SK-N-SH (cell line): ENCODE measurements at regions of chr2 and their contacts with region 1.

Region 1: DNA sequence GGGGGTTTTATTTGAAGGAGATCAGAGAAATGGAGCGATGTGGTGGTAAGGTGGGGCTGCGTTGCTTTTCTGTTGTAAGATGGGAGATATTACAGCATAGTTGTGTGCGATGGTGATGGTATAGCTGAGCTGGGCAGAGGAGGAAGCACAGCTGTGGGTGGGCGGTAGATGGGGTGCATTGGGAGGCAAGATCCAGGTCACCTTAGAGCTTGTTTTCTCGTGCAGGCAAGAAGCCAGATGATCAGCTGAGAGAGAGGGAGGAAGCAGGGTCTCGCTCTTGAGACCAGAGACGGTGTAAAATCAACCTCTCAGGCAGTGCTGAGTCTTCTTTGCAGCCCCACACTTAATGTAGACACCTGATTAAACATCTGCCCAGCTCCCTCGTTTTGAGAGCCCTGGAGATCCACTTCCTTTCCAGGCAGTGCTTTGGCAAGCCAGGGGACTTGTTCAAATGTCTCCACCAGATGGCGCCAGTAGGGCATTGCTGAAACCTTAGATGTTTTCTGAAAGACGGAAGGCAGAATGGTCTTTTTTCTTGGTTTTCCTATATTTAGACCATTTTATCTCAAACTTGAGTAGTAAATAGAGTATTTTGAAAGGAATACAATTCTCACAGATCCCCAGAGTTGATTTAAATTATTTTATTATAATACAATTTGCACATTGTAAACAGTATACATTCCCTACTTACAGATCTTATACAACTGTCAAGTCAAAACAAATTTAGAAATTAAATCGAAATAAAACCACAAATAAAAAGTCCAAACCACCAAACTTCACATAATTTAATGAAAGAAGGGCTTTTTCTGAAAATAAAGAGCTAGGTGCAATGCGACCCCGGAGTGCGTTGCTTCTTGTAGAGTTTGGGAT is 21.1 kb upstream of the LYPD6B start:
- DNase-seq: peak; percentile 77
- H3K4me3 ChIP-seq: peak overlapping the region in 1 of 2 experiments; percentile 45; a peak in 1 of 4 replicates
- H3K27ac ChIP-seq: no peak overlapping the region
- H3K4me1 ChIP-seq: peaks cover 0 to 5% of the 10 kb centered on the region in 2 experiments; a peak in 2 of 4 replicates
- H3K27me3 ChIP-seq: no peaks in the 10 kb centered on the region
- CTCF ChIP-seq: peak; percentile 88
- EP300 ChIP-seq: no peak
- RAD21 ChIP-seq: peak; percentile 92

Region 2: GRCh38 chr2:148720501-148721001 is 296.8 kb before region 1 on chr2:
- CTCF ChIA-PET with region 1: no interaction called
- POLR2A ChIA-PET with region 1: no interaction called
- DNase-seq: peak; percentile 22
- H3K4me3 ChIP-seq: peak overlapping the region in 1 of 2 experiments; percentile 12; a peak in 2 of 4 replicates
- H3K27ac ChIP-seq: peak overlapping the region in 1 of 2 experiments; percentile 64; a peak in 2 of 4 replicates
- H3K4me1 ChIP-seq: peaks cover 14 to 19% of the 10 kb centered on the region in 2 experiments; a peak in 3 of 4 replicates
- H3K27me3 ChIP-seq: no peaks in the 10 kb centered on the region
- CTCF ChIP-seq: no peak
- EP300 ChIP-seq: no peak
- RAD21 ChIP-seq: no peak

Region 3: GRCh38 chr2:149006883-149007540 is 10.3 kb before region 1 on chr2:
- CTCF ChIA-PET with region 1: interaction called, 13 read pairs
- POLR2A ChIA-PET with region 1: no interaction called
- DNase-seq: peak; percentile 3
- H3K4me3 ChIP-seq: no peak overlapping the region
- H3K27ac ChIP-seq: no peak overlapping the region
- H3K4me1 ChIP-seq: no peaks in the 10 kb centered on the region; a peak in 1 of 4 replicates
- H3K27me3 ChIP-seq: no peaks in the 10 kb centered on the region
- CTCF ChIP-seq: no peak
- EP300 ChIP-seq: no peak
- RAD21 ChIP-seq: no peak

Region 4: DNA sequence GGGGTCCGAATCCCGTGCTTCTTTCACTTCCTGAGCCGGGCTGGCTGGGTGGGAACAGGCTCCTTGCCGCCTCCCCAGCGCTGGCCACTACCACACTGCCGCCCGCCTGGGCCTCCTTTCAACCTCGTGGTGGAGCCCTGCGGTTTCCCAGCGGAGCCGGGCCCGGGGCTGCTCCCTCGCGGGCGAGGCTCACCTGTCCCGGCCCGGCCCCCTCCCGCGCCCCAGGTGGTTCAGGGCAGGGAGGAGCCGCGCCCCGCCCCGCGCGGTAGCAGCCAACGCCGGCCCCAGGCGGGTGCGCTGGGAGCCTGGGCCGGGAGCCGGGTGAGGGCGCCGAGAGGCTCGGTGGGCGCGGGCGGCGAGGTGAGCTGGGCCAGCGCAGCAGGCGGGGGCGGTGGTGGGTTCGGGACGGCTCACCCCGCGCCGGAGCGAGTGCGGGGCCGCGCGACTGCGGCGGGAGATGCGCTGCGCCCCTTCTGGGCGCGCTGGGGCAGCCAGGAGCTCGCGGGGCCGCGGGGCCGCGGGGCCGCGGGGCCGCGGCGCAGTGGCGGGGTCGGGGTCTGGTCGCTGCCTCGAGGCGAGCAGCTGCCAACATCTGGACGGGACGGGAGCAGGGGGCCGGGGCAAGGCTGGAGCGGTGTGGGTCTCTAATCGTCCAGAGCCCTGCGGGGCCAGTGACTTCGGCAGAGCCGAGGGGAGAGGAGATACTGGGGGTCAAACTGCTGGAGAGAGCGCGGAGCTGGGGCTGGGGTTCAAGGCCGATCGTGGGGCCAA is 21.3 kb after region 1 on chr2 and contains the start of gene LYPD6B:
- CTCF ChIA-PET with region 1: interaction called, 55 read pairs
- POLR2A ChIA-PET with region 1: no interaction called
- DNase-seq: peak; percentile 87
- H3K4me3 ChIP-seq: peak within 1 kb of the TSS; percentile 58 to 63
- H3K27ac ChIP-seq: no peak within 1 kb of the TSS
- H3K4me1 ChIP-seq: peaks cover 0 to 7% of the 10 kb centered on the region in 2 experiments; a peak in 1 of 4 replicates
- H3K27me3 ChIP-seq: no peaks in the 10 kb centered on the region
- CTCF ChIP-seq: peak; percentile 13; the same call in 1 of the 2 replicates
- EP300 ChIP-seq: no peak
- RAD21 ChIP-seq: peak; percentile 16
- polyA plus RNA-seq, gene LYPD6B: 17.0 and 18.2 TPM in 2 replicates

Region 5: DNA sequence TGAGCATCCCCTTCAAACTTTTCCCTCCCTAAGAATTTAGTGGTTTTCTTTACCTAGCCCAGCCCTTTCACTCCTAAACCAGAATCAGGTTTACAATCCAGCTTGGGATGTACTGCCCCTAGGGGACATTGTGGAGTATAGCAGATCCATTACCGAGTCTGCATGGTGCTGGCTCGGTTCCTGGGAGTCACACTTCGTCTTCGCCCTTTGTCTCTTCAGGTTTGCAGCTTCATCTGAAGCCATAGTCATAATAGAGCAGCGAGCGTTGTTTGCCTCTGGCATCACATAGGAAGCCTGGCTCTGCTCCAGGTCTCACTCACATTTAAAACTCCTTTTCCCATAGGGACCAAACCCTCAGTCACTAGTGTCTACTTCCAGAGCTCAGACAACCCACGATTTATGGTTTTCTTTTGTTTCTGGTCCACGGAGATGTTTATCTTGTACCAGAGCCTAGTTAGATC is 296.2 kb after region 1 on chr2:
- CTCF ChIA-PET with region 1: interaction called, 46 read pairs
- POLR2A ChIA-PET with region 1: no interaction called
- DNase-seq: peak; percentile 85
- H3K4me3 ChIP-seq: no peak overlapping the region; a peak in 2 of 4 replicates
- H3K27ac ChIP-seq: peak overlapping the region in 1 of 2 experiments; percentile 43; a peak in 1 of 4 replicates
- H3K4me1 ChIP-seq: peaks cover 0 to 9% of the 10 kb centered on the region in 2 experiments; a peak in 2 of 4 replicates
- H3K27me3 ChIP-seq: no peaks in the 10 kb centered on the region
- CTCF ChIP-seq: peak; percentile 83
- EP300 ChIP-seq: no peak
- RAD21 ChIP-seq: peak; percentile 76

Region 6: GRCh38 chr2:149490296-149490695 is 472.9 kb after region 1 on chr2:
- CTCF ChIA-PET with region 1: interaction called, 12 read pairs
- POLR2A ChIA-PET with region 1: no interaction called
- DNase-seq: peak; percentile 37
- H3K4me3 ChIP-seq: no peak overlapping the region
- H3K27ac ChIP-seq: no peak overlapping the region
- H3K4me1 ChIP-seq: peaks cover 0 to 4% of the 10 kb centered on the region in 2 experiments; a peak in 2 of 4 replicates
- H3K27me3 ChIP-seq: no peaks in the 10 kb centered on the region
- CTCF ChIP-seq: peak; percentile 33
- EP300 ChIP-seq: no peak
- RAD21 ChIP-seq: peak; percentile 74

Region 7: DNA sequence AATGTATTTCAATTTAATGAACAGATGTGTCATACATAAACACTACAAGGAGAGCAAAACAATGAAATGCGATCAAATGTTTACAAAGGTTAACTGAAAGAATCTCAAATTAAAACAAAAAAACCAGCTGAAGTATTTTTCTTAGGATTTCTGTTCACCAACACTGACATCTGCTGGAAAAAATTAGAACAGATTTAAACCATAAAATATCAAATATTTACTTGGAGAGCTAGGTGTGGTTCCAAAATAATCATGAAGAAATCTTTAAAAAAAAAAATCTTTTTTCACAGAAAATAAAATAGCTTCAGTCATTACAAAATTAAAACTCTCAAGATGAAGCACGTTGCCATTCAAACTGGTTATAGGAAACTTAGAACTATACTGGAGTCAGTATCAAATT is 556.4 kb after region 1 on chr2:
- CTCF ChIA-PET with region 1: interaction called, 28 read pairs
- POLR2A ChIA-PET with region 1: interaction called, 3 read pairs
- DNase-seq: no peak
- H3K4me3 ChIP-seq: no peak overlapping the region
- H3K27ac ChIP-seq: no peak overlapping the region
- H3K4me1 ChIP-seq: no peaks in the 10 kb centered on the region
- H3K27me3 ChIP-seq: no peaks in the 10 kb centered on the region
- CTCF ChIP-seq: peak; percentile 64
- EP300 ChIP-seq: no peak
- RAD21 ChIP-seq: peak; percentile 40; the same call in 1 of the 2 replicates